Activated T-helper 1 cell treated with anti-CD3 and anti-CD28 coated beads, Interleukin-12 subunit alpha, Interleukin-12 subunit beta, Interleukin-2, Interleukin-4 antibody, amounts not matched to agents 30 ng/mL and 10 ng/mL and 1 ng/mL, durations not matched to agents 14 hours and 24 hours and 36 hours (primary cell): ENCODE measurements at regions of chr4 and their contacts with region 1.

Region 1: DNA sequence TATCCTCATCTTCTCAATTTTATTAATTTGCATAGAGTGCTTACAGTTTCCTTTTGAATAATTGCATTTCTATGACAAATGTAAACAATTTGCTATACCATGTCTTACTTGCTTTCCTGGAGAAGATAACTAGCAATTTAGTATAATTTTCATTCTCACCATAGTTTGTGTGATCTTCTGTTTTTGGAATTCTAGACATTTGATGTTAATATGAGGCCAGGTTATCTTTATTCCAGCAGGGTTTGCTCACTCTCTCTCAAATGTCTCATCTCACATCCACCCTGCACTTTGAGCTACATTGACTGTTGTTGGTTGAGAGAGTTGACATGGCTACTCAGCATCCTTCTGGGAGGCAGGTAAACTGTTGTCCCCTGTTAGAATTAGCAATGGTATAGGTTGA is 315.8 kb upstream of the AGA start:
- DNase-seq: no peak
- H3K4me3 Mint-ChIP-seq: no peak overlapping the region
- H3K27ac Mint-ChIP-seq: no peak overlapping the region
- H3K4me1 Mint-ChIP-seq: peaks cover 14% of the 10 kb centered on the region
- H3K27me3 Mint-ChIP-seq: peaks cover 6% of the 10 kb centered on the region

Region 2: GRCh38 chr4:177740563-177740962 is 17.5 kb before region 1 on chr4:
- intact Hi-C with region 1: loop called (anchors 1 kb)
- DNase-seq: no peak
- H3K4me3 Mint-ChIP-seq: no peak overlapping the region
- H3K27ac Mint-ChIP-seq: no peak overlapping the region
- H3K4me1 Mint-ChIP-seq: no peaks in the 10 kb centered on the region
- H3K27me3 Mint-ChIP-seq: no peaks in the 10 kb centered on the region

Region 3: GRCh38 chr4:178255172-178255571 is 497.2 kb after region 1 on chr4:
- intact Hi-C with region 1: no loop called
- DNase-seq: no peak
- H3K4me3 Mint-ChIP-seq: no peak overlapping the region
- H3K27ac Mint-ChIP-seq: no peak overlapping the region
- H3K4me1 Mint-ChIP-seq: no peaks in the 10 kb centered on the region
- H3K27me3 Mint-ChIP-seq: no peaks in the 10 kb centered on the region